ENCODE measurements at regions of chr20 and their contacts with region 1.

Region 1: DNA sequence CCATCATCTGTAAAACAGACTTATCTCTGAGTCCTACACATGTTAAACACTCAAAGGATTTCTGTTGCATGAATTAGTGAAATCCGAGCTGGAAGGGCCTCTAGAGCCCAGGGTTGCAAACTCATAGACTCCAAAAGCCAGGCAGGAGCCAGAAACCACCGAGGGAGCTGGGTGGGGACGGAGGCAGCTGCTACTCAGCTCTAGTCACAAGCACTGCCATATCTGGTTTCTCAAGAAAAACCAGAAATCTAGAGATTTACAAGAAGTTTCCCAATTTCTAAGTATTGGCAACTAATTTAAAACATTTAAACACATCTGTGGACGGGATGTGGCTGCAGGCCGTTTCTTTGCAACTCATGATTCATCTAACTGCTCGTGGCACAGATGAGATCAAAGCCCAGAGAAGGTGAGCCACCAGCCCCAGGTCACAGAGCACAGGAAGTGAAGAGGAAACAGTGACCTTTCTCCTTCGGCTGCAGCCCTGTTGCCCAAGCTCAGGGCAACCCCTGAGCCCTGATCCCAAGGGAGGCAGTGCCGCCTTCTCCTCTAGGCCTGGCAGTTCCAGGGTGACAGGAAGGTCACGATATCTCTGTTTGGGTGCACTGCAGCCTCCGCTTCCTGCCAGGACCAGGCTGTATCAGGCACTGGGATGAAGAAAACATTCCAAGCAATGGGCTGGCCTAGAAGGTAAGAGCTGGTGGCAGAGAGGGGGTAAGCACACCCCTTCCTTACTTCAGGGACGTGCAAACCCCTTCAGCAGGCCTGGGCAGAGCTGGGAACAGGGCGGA is 26.4 kb upstream of the PTGIS start:
- DNase-seq: peak; percentile 87
- ATAC-seq: peak; percentile 62
- H3K4me3 Mint-ChIP-seq: peak overlapping the region; percentile 76
- H3K27ac Mint-ChIP-seq: peak overlapping the region; percentile 96
- H3K4me1 Mint-ChIP-seq: peaks cover 77% of the 10 kb centered on the region
- H3K27me3 Mint-ChIP-seq: peaks cover 3% of the 10 kb centered on the region

Region 2: GRCh38 chr20:48760403-48760983 is 833.8 kb before region 1 on chr20:
- CTCF ChIA-PET with region 1: no interaction called
- POLR2A ChIA-PET with region 1: no interaction called
- intact Hi-C with region 1: loop called in 1 of 2 experiments (anchors 10 kb)
- DNase-seq: peak; percentile 78
- ATAC-seq: peak; percentile 87
- H3K4me3 Mint-ChIP-seq: peak overlapping the region; percentile 34
- H3K27ac Mint-ChIP-seq: peak overlapping the region; percentile 96
- H3K4me1 Mint-ChIP-seq: peaks cover 67% of the 10 kb centered on the region
- H3K27me3 Mint-ChIP-seq: no peaks in the 10 kb centered on the region

Region 3: DNA sequence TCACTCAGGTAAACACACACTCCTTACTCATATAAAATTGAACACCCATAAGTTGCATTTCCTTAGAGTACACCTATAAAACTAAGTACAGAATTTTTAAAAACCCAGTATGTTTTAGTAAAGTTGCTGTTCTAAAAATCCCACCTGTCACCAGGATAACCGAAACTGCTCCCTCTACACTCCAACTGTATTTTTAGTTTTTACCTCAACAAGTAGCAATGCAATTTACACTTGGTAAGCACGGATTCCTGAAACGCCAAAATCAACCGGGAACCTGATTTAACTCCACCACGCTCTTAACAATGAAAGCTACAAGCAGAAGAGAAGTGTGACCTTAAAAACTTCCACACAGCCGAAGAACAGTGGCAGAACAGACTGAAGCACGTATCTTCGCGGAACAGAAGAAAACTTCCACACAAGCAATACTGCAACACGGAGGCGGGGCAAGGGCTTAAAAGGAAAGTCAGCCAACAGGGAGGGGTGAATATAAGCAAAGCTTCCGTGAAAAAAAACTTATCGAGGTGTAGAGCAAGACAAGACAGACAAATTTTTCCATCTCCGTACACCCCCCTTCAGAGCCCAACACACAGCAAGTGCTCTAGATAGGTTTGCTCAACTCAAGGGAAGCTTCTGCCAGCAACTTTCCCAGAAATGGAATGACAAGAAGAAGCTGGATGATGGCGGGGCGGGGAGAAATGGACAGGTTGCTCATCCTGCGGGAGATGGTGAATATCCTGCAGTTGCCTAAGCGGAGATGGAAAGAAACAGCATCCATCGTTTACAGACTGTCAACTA is 407.6 kb before region 1 on chr20:
- CTCF ChIA-PET with region 1: no interaction called
- POLR2A ChIA-PET with region 1: no interaction called
- intact Hi-C with region 1: loop called in 1 of 2 experiments (anchors 10 kb)
- DNase-seq: peak; percentile 85
- ATAC-seq: peak; percentile 49
- H3K4me3 Mint-ChIP-seq: peak overlapping the region; percentile 96
- H3K27ac Mint-ChIP-seq: peak overlapping the region; percentile 89
- H3K4me1 Mint-ChIP-seq: peaks cover 51% of the 10 kb centered on the region
- H3K27me3 Mint-ChIP-seq: no peaks in the 10 kb centered on the region

Region 4: DNA sequence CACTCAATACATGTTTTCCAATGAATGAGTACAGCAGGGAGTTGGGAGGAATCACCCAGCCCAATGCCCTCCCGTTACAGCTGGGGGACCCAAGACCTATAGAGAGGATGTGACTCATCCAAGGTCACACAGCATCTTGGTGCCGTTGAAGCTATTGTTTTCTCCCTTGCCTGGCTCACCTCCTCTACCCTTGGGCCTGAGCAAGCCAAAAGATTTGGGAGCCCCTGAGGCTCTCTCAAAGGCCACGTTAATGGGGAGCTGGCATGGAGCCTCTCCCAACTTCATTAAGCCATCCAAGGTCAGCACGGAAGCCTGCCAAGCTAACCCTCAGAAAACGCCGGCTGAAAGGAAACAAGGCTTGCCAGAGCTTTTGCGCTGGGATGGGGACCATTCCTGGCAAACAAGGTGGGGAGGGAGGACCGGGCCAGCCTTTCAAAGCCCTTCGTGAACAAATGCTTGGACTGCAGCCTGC is 142.3 kb before region 1 on chr20:
- CTCF ChIA-PET with region 1: no interaction called
- POLR2A ChIA-PET with region 1: no interaction called
- intact Hi-C with region 1: no loop called
- DNase-seq: no peak
- ATAC-seq: no peak
- H3K4me3 Mint-ChIP-seq: no peak overlapping the region
- H3K27ac Mint-ChIP-seq: no peak overlapping the region
- H3K4me1 Mint-ChIP-seq: no peaks in the 10 kb centered on the region
- H3K27me3 Mint-ChIP-seq: peaks cover 32% of the 10 kb centered on the region

Region 5: GRCh38 chr20:49534255-49534712 is 60.1 kb before region 1 on chr20:
- CTCF ChIA-PET with region 1: interaction called, 3 read pairs
- POLR2A ChIA-PET with region 1: interaction called, 3 read pairs
- intact Hi-C with region 1: loop called (anchors 1 kb)
- DNase-seq: peak; percentile 79
- ATAC-seq: peak; percentile 74
- H3K4me3 Mint-ChIP-seq: no peak overlapping the region
- H3K27ac Mint-ChIP-seq: peak overlapping the region; percentile 65
- H3K4me1 Mint-ChIP-seq: peaks cover 15% of the 10 kb centered on the region
- H3K27me3 Mint-ChIP-seq: peaks cover 12% of the 10 kb centered on the region

Region 6: GRCh38 chr20:49541733-49542513 is 52.4 kb before region 1 on chr20:
- CTCF ChIA-PET with region 1: interaction called, 15 read pairs
- POLR2A ChIA-PET with region 1: interaction called, 3 read pairs
- intact Hi-C with region 1: no loop called
- DNase-seq: peak; percentile 84
- ATAC-seq: peak; percentile 87
- H3K4me3 Mint-ChIP-seq: no peak overlapping the region
- H3K27ac Mint-ChIP-seq: peak overlapping the region; percentile 85
- H3K4me1 Mint-ChIP-seq: peaks cover 10% of the 10 kb centered on the region
- H3K27me3 Mint-ChIP-seq: peaks cover 11% of the 10 kb centered on the region

Region 7: DNA sequence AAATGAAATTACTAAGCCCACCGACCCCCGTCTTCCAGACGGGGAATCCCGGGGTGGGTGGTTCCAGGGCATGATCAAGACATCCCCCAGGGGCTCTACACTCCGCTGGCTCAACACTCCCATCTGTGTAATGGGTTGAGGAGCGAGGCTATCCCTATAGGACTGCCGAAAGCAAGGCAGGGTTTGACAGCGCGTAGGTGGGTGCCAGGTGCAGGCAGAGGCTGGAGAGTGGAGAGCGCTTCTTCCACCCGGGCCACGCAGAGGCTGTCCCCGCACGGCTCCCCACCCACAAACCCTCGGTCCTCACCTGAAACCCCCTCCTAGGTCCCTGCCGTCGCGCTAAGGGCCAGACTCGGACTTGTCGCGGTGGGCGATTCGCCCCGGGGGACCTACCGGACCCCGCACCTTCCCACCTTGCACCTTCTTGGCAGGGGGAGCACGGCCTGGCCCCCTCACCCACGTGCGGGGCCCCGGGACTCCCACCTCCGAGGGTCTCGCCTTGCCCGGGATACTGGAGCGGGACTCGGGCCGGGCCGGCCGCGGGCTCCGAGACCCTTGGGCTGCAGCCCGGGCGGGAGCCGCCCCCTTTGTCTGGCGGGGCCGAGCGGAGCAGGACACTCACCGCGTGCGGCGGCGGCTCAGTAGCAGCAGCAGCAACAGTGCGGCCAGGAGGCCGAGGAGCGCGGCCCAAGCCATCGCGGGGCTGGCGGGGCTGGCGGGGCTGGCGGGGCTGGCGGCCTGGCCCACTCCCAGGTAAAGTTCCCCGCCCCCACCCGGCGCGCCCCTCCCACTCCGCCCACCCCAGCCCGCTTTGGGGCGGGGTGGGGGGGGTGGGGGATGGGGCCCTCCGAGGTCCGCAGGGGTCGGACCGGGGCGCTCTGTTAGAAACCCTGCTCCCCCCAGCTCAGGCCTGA is 26.7 kb before region 1 on chr20 and contains the start of gene PTGIS:
- CTCF ChIA-PET with region 1: no interaction called
- POLR2A ChIA-PET with region 1: interaction called, 6 read pairs
- intact Hi-C with region 1: loop called in 1 of 2 experiments (anchors 2 kb)
- DNase-seq: no peak
- ATAC-seq: no peak
- H3K4me3 Mint-ChIP-seq: no peak within 1 kb of the TSS
- H3K27ac Mint-ChIP-seq: no peak within 1 kb of the TSS
- H3K4me1 Mint-ChIP-seq: peaks cover 9% of the 10 kb centered on the region
- H3K27me3 Mint-ChIP-seq: peaks cover 44% of the 10 kb centered on the region
- total RNA-seq, gene PTGIS: 0.21 to 0.43 TPM

Region 8: DNA sequence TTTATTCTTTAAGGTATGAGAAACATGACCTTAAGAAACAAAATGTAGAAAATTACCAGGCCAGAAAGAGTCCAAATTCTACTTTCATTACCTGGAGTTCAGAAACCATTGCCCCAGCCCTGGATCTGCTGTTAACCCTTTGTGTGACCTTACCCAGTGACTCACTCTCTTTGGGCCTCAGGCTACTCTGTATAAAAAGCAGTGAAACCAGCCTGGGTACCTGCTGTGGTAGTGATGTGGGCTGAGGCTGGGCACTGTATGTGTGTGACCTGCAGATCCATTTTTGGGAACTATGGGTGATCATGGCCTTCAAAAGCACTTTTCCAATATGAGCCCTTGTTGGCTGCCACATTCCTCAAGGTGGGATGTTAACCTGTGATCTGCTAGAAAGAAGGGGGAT is 265.5 kb after region 1 on chr20:
- CTCF ChIA-PET with region 1: no interaction called
- POLR2A ChIA-PET with region 1: no interaction called
- intact Hi-C with region 1: no loop called
- DNase-seq: no peak
- ATAC-seq: no peak
- H3K4me3 Mint-ChIP-seq: no peak overlapping the region
- H3K27ac Mint-ChIP-seq: no peak overlapping the region
- H3K4me1 Mint-ChIP-seq: no peaks in the 10 kb centered on the region
- H3K27me3 Mint-ChIP-seq: no peaks in the 10 kb centered on the region

Measured in activated CD4-positive, alpha-beta T cell treated with anti-CD3 and anti-CD28 coated beads for 36 hours (primary cell).